AG04449 (cell line): ENCODE measurements at regions of chr7 and their contacts with region 1.

Region 1: DNA sequence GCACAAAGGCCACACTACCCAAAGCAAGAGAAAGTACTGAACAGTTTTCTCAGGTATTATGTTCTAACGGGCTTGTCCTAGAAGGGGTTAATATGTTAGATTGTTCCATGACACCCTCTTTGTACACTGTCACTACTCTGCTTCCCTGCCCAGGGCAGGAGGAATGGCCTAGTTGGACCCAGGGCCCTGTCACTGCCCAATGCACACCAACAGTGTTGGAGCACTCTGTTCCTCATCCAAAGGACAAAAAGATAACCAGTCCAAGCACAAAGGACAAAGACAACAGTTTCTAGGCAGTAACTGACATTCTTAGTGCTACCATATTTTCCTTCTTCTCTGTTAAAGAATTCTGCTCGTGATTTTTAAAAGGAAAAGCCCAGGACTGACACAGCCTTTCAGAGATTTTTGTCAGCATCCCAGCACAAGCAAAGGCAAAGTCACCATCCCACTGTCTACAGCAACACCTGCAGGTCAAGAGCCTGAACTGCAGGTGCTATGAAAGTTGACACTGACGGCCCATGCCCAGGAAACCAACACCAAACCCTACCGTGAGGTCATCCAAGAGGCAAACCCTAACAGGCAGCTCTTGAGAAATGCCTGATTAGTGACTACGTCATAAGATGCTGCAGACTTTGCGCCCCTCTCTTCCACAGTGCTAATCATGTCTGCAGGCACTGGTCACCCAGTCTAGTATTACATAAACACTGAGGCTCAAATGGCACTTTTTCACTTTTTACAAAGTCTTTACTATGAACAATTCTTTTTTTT is 13.2 kb downstream of the NUDCD3 start:
- DNase-seq: no peak
- H3K4me3 ChIP-seq: no peak overlapping the region
- CTCF ChIP-seq: peak; percentile 92

Region 2: GRCh38 chr7:44466300-44467216 is 10.7 kb before region 1 on chr7:
- CTCF ChIA-PET with region 1: interaction called, 10 read pairs
- POLR2A ChIA-PET with region 1: no interaction called
- DNase-seq: peak; percentile 47
- H3K4me3 ChIP-seq: no peak overlapping the region
- CTCF ChIP-seq: no peak

Region 3: GRCh38 chr7:44606450-44607254 is 129.4 kb after region 1 on chr7 and contains the start of gene OGDH:
- CTCF ChIA-PET with region 1: no interaction called
- POLR2A ChIA-PET with region 1: no interaction called
- DNase-seq: peak; percentile 89
- H3K4me3 ChIP-seq: peak within 1 kb of the TSS; percentile 90
- CTCF ChIP-seq: no peak